ENCODE measurements at regions of chr17 and their contacts with region 1.

Region 1: DNA sequence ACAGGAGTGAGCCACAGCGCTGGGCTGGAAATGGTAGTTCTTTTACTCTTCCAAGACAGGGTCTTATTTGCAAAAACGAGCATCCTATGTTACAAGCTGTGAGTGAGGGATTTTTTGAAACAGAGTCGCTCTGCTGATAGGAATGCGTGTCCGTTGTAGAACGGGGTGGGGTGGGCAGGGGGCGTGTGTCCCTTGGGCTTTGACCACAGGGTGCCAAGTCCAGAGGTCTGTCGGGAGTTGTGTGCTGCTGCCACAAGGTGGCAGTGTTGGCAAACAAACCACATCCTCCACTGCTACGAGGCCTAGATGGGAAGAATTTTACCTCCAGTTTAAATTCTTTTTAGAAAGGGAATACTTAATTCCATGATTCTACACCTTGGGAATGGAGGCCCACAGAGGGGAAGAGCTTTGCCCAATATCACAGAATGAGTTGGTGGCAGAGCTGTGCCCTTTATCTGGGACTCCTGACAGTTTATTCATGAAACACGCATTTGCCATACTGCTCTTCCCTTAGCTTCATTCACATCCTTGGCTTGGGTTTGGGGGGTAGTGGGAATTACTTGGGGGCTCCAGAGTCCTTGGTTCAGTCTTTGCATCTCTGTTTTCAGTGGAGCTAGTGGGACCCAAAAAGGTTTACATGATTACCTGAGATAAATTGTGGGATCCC is 30.6 kb upstream of the ETV4 start:
- DNase-seq: peak; percentile 75
- H3K4me3 Mint-ChIP-seq: no peak overlapping the region
- H3K27ac Mint-ChIP-seq: no peak overlapping the region
- H3K4me1 Mint-ChIP-seq: peaks cover 17% of the 10 kb centered on the region
- H3K27me3 Mint-ChIP-seq: no peaks in the 10 kb centered on the region
- CTCF ChIP-seq: peak; percentile 96

Region 2: DNA sequence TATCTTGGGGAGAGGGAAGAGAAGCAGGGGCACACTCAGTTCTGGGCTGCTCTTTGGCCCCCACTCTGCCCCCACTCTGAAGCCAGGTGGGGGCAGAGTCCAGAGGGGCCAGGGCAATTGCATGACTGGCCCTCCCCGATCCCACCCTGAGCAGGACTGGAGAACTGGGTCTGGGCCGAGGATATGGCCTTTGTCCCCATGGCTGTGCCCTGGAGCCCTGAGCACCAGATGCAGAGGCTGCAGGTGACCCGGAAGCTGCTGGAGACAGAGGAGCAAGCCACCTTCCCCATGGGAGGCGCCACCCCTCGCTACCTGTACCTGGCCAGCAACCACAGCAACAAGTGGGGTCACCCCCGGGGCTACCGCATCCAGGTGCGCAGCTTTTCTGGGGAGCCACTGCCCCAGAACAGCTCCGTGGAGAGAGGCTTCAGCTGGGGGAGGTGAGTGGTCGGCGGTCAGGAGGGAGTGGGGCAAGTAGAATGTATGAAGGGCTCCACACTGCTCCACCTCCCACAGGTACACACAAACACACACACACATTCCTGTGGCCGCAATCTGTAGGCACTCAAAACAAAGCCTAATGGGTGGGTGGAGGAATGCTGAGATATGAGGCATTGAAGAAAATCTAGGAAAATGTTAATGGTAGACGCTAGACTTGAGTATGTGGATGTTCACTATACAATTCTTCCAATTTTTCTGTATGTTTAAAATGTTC is 704.3 kb before region 1 on chr17:
- CTCF ChIA-PET with region 1: no interaction called
- POLR2A ChIA-PET with region 1: no interaction called
- intact Hi-C with region 1: no loop called
- DNase-seq: no peak
- H3K4me3 Mint-ChIP-seq: no peak overlapping the region
- H3K27ac Mint-ChIP-seq: no peak overlapping the region
- H3K4me1 Mint-ChIP-seq: no peaks in the 10 kb centered on the region
- H3K27me3 Mint-ChIP-seq: peaks cover 12% of the 10 kb centered on the region
- CTCF ChIP-seq: no peak

Region 3: DNA sequence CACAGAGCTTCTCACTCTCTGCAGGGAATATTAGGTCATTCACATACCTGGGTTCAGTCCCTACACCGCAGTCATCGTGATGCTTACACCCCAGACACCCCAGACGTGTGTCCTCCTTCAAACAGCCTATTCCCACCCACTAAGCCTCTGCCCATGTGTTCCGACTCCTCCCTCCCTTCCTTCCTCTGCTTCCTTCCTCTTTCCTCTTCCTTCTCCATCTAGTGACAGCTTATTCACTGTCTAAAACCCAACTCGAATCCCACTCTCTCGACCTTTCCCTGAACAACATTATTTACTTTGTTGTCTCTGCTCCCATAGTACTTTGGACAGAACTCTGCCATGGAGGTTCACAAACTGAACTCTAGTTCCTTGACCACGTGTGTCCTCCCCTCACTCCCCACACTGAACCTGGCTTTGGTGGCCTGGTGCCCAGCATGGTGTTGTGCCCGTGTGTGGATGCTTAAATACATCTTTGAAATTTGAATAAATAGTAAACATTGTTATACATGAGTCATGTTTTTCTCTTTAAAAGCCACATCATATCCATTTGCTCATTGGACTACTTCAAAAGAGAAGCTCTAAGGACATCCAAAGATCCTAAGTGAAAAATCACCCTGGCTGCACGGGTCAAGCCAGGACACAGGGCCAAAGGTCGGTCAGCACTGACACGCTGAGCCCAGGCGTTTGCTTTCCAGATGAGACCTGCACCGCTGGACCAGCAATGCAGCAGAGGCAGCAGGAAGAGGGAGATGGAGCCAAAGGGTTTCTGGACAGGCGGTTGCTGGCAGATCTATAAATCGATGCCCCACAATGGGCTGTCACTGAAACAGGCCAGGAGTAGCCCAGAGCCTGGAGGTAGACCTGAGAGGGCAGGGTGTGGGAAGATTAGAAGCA is 690.2 kb before region 1 on chr17:
- CTCF ChIA-PET with region 1: no interaction called
- POLR2A ChIA-PET with region 1: no interaction called
- intact Hi-C with region 1: no loop called
- DNase-seq: no peak
- H3K4me3 Mint-ChIP-seq: no peak overlapping the region
- H3K27ac Mint-ChIP-seq: no peak overlapping the region
- H3K4me1 Mint-ChIP-seq: no peaks in the 10 kb centered on the region
- H3K27me3 Mint-ChIP-seq: no peaks in the 10 kb centered on the region
- CTCF ChIP-seq: no peak

Region 4: DNA sequence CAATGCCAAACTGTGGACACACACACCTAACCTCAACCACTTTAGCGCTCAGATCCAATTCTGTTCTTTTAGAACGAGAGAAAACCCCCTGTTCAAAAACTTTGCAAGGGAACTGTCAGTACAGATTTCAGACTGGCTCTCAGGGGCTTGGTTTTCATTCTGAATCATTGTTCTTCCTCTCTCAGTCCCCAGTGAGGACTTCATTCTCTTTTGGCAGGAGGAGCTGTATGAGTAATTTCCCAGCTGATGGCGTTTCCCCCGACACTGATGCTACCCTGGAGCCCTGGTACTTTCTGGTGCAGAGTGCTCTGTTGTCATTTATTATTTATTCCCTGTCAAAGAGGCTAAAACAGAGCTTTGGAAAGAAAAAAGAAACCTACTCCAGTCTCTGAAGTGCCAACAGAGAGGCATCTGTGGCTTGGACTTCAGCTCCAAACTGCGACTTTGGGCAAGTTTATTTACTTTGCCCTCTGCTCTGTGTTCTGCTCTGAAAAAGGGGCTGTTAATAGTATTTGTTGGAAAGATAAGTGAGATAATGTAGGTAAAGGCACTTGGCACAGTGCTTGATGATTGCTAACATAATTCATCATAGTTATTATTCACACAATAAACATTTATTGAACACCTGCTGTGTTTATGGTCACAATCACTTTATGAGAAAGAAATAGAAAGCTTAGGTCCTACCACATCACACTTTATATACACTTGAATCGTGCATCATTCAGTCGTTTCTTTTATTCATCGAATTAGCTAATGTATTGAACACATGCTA is 58.9 kb before region 1 on chr17:
- CTCF ChIA-PET with region 1: interaction called, 6 read pairs
- POLR2A ChIA-PET with region 1: no interaction called
- intact Hi-C with region 1: loop called (anchors 1 kb)
- DNase-seq: peak; percentile 29
- H3K4me3 Mint-ChIP-seq: no peak overlapping the region
- H3K27ac Mint-ChIP-seq: no peak overlapping the region
- H3K4me1 Mint-ChIP-seq: no peaks in the 10 kb centered on the region
- H3K27me3 Mint-ChIP-seq: no peaks in the 10 kb centered on the region
- CTCF ChIP-seq: no peak

Region 5: DNA sequence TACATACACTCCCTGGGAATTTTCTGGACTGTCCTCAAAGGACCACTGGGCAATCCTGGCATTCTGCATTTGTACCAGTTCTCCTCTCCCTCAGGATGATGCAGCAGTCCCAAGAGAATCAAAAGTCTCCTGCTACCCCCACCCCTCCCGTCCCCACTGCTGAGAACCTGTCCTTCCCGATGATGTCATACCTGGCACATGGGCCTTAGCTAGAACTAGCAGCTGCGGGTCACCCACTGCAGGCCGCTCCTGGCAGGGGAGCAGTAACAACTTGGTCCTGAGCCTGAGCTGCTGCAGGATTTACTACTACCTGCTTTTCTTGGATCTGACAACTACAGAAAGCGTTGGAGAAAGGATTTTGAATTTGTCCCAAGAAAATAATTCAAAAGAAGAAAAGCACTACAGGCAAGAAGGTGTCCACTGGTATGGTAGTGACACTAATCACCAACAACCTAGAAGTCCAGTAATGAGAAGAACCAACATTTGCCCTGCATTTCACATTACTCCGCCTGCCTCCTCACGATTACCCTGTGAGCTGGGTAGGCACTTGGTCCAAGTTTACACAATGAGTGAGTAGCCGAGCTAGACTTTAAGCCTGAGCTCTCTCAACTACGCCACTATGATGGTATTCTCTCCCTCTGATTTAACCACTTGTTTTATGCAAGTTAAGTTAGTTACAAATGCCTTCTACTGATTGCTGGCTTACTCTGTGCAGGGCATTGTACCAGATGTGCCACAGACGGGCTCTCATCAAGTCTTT is 24.8 kb after region 1 on chr17:
- CTCF ChIA-PET with region 1: interaction called, 13 read pairs
- POLR2A ChIA-PET with region 1: no interaction called
- intact Hi-C with region 1: no loop called
- DNase-seq: no peak
- H3K4me3 Mint-ChIP-seq: no peak overlapping the region
- H3K27ac Mint-ChIP-seq: no peak overlapping the region
- H3K4me1 Mint-ChIP-seq: peaks cover 8% of the 10 kb centered on the region
- H3K27me3 Mint-ChIP-seq: peaks cover 14% of the 10 kb centered on the region
- CTCF ChIP-seq: no peak

Region 6: DNA sequence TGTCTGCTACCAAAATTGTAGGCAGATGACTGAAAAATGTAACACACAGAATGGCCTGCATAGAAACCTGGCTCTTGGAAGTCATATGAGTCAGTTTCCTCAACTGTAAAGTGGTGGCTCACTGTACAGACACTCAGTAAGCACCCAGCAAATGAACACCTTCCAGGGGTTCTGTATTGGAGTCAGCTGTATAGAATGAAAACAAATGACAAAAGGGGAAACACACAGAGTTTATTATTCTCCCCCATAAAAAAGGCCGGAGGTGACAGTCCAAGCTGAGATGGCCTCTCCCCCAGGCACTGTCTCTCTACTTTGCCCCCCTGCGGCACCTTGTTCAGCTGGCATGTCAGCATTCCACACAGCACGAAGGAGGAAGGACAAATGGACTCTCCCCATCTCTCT is 91.3 kb after region 1 on chr17:
- CTCF ChIA-PET with region 1: interaction called, 25 read pairs
- POLR2A ChIA-PET with region 1: interaction called, 14 read pairs
- intact Hi-C with region 1: loop called (anchors 1 kb)
- DNase-seq: no peak
- H3K4me3 Mint-ChIP-seq: no peak overlapping the region
- H3K27ac Mint-ChIP-seq: no peak overlapping the region
- H3K4me1 Mint-ChIP-seq: peaks cover 5% of the 10 kb centered on the region
- H3K27me3 Mint-ChIP-seq: no peaks in the 10 kb centered on the region
- CTCF ChIP-seq: no peak

Region 7: GRCh38 chr17:43680461-43680860 is 103.8 kb after region 1 on chr17:
- CTCF ChIA-PET with region 1: interaction called, 12 read pairs
- POLR2A ChIA-PET with region 1: interaction called, 4 read pairs
- intact Hi-C with region 1: no loop called
- DNase-seq: no peak
- H3K4me3 Mint-ChIP-seq: no peak overlapping the region
- H3K27ac Mint-ChIP-seq: no peak overlapping the region
- H3K4me1 Mint-ChIP-seq: peaks cover 4% of the 10 kb centered on the region
- H3K27me3 Mint-ChIP-seq: no peaks in the 10 kb centered on the region
- CTCF ChIP-seq: no peak

Region 8: GRCh38 chr17:43720311-43721060 is 143.8 kb after region 1 on chr17:
- CTCF ChIA-PET with region 1: no interaction called
- POLR2A ChIA-PET with region 1: no interaction called
- intact Hi-C with region 1: no loop called
- DNase-seq: no peak
- H3K4me3 Mint-ChIP-seq: peak overlapping the region; percentile 70
- H3K27ac Mint-ChIP-seq: no peak overlapping the region
- H3K4me1 Mint-ChIP-seq: peaks cover 6% of the 10 kb centered on the region
- H3K27me3 Mint-ChIP-seq: peaks cover 13% of the 10 kb centered on the region
- CTCF ChIP-seq: no peak

Region 9: GRCh38 chr17:43740541-43740940 is 163.8 kb after region 1 on chr17:
- CTCF ChIA-PET with region 1: no interaction called
- POLR2A ChIA-PET with region 1: no interaction called
- intact Hi-C with region 1: no loop called
- DNase-seq: peak; percentile 21
- H3K4me3 Mint-ChIP-seq: no peak overlapping the region
- H3K27ac Mint-ChIP-seq: no peak overlapping the region
- H3K4me1 Mint-ChIP-seq: peaks cover 8% of the 10 kb centered on the region
- H3K27me3 Mint-ChIP-seq: no peaks in the 10 kb centered on the region
- CTCF ChIP-seq: no peak

Region 10: GRCh38 chr17:43760254-43760852 is 183.7 kb after region 1 on chr17:
- CTCF ChIA-PET with region 1: interaction called, 20 read pairs
- POLR2A ChIA-PET with region 1: no interaction called
- intact Hi-C with region 1: loop called (anchors 2 kb)
- DNase-seq: peak; percentile 95
- H3K4me3 Mint-ChIP-seq: no peak overlapping the region
- H3K27ac Mint-ChIP-seq: no peak overlapping the region
- H3K4me1 Mint-ChIP-seq: peaks cover 12% of the 10 kb centered on the region
- H3K27me3 Mint-ChIP-seq: no peaks in the 10 kb centered on the region
- CTCF ChIP-seq: peak; percentile 98

Measured in MCF 10A (cell line).